Common myeloid progenitor, CD34-positive (primary cell): ENCODE measurements at regions of chr15 and their contacts with region 1.

Region 1: DNA sequence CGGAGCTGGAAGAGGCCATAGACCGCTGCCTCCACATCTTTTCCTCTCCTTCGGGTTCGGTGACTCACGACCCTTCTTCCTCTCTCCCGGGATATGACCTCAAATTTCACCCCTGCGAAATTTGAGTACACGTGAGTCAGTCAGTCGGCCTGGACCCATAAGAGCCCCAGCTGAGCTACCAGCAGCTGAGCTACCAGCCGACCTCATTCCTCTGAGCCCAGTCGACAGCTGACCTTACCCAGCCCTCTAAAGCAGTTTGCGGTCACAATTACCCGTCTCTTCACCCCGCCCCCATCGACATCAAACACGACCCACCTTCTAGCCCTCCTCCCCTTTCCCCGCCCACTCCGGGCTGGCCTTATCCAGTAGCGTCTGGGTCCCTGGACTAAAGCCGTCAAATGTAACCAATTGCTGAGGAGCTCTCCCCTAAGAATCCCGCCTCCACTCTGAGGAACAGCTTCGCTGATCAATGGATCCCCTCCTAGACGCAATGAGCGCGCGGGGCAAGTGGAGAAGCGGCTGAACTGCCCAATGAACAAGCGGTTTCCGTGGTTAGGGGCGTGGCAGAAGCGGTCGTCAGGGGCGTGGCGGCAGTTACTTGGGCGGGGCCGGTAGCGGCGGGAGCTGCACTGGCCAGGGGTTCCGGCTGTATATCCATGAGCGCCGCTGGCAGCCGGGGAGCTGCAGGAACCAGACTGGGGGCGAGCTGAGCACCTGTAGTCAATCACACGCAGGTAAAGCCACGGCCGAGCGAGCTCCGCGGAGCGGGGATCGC is at the start of gene ABHD2:
- DNase-seq: peak; percentile 100
- H3K4me3 ChIP-seq: peak within 1 kb of the TSS; percentile 70 to 95 (median 91)
- H3K27ac ChIP-seq: peak within 1 kb of the TSS; percentile 77 to 89
- H3K4me1 ChIP-seq: peaks cover 27 to 70% (median 56%) of the 10 kb centered on the region in 4 experiments
- H3K27me3 ChIP-seq: no peaks in the 10 kb centered on the region

Region 2: GRCh38 chr15:89003865-89004725 is 83.9 kb before region 1 on chr15:
- CTCF ChIA-PET with region 1: no interaction called
- POLR2A ChIA-PET with region 1: no interaction called
- DNase-seq: peak in 1 of 3 donors; percentile 14
- H3K4me3 ChIP-seq: no peak overlapping the region
- H3K27ac ChIP-seq: no peak overlapping the region
- H3K4me1 ChIP-seq: peaks cover 0 to 20% (median 14%) of the 10 kb centered on the region in 4 experiments
- H3K27me3 ChIP-seq: no peaks in the 10 kb centered on the region

Region 3: GRCh38 chr15:89101302-89102191 is 13.5 kb after region 1 on chr15:
- CTCF ChIA-PET with region 1: interaction called, 14 read pairs
- POLR2A ChIA-PET with region 1: interaction called, 4 read pairs
- DNase-seq: peak in 1 of 3 donors; percentile 44
- H3K4me3 ChIP-seq: no peak overlapping the region
- H3K27ac ChIP-seq: no peak overlapping the region
- H3K4me1 ChIP-seq: peaks cover 0 to 15% (median 5%) of the 10 kb centered on the region in 4 experiments
- H3K27me3 ChIP-seq: no peaks in the 10 kb centered on the region

Region 4: GRCh38 chr15:89307046-89307587 is 219.1 kb after region 1 on chr15:
- CTCF ChIA-PET with region 1: no interaction called
- POLR2A ChIA-PET with region 1: no interaction called
- DNase-seq: no peak
- H3K4me3 ChIP-seq: no peak overlapping the region
- H3K27ac ChIP-seq: peak overlapping the region in 1 of 2 experiments; percentile 7
- H3K4me1 ChIP-seq: no peaks in the 10 kb centered on the region
- H3K27me3 ChIP-seq: no peaks in the 10 kb centered on the region